ENCODE measurements at regions of chr1 and their contacts with region 1.

Region 1: DNA sequence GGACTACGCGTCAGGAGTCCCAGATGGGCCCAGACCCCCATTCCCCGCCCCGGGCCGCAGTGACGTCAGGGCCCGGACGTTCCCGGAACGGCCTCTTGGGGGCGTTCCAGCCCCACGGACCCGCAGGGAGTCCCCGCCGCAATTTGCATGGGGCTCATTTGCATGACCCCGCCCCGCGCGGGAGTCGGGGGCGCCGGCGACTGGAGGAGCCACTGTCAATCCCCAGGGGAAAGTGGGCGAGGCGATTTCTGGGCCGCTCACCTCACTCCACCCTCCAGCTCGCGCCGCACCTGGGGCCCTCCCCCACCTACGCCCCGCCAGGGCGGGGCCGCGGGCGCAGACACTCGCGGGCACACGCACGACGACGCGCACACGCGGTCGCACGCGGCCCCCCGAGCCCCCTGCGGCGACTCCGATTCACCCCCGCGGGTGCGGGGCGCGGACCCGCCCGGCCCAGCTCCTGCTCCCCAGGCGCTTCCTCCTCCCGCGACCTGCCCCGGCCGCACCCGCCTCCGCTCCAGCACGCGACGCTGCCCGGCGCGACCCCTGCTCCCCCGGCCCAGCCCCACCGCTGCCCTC is 13.2 kb downstream of the AGRN start:
- DNase-seq: peak; percentile 97
- ATAC-seq: peak; percentile 96
- H3K4me3 Mint-ChIP-seq: peak overlapping the region; percentile 72
- H3K27ac Mint-ChIP-seq: peak overlapping the region; percentile 24
- H3K4me1 Mint-ChIP-seq: peaks cover 19% of the 10 kb centered on the region
- H3K27me3 Mint-ChIP-seq: no peaks in the 10 kb centered on the region
- CTCF ChIP-seq: peak; percentile 67

Region 2: GRCh38 chr1:1069061-1069708 is 36.1 kb after region 1 on chr1:
- CTCF ChIA-PET with region 1: interaction called, 34 read pairs
- POLR2A ChIA-PET with region 1: interaction called, 159 read pairs
- intact Hi-C with region 1: loop called (anchors 1 kb)
- DNase-seq: peak; percentile 95
- ATAC-seq: peak; percentile 47
- H3K4me3 Mint-ChIP-seq: peak overlapping the region; percentile 81
- H3K27ac Mint-ChIP-seq: peak overlapping the region; percentile 72
- H3K4me1 Mint-ChIP-seq: peaks cover 37% of the 10 kb centered on the region
- H3K27me3 Mint-ChIP-seq: peaks cover 3% of the 10 kb centered on the region
- CTCF ChIP-seq: no peak

Region 3: DNA sequence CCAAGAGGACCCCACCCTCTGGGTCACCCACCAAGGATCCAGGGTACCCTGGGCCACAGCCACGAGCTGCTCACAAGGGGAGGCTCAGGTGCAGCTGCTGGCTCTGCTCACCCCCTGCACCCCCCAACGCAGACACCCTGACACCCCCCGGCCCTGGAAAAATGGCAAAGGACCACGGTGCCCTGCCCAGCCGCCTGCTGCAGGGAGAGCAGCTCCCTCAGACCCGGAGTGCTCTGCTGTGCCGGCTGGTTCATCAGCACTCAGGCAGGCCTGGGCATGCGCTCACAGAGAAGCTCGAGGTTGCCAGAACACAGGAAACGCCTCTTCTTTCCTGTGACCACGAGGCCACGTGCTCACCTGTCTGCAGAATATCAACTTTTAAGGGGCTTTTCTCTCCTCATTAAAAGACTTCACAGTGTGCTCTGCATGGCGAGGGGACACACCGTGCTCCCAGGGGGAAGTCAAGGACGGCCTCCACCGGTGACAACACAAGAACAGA is 217.7 kb after region 1 on chr1:
- CTCF ChIA-PET with region 1: interaction called, 7 read pairs
- POLR2A ChIA-PET with region 1: interaction called, 6 read pairs
- intact Hi-C with region 1: loop called (anchors 1 kb)
- DNase-seq: no peak
- ATAC-seq: peak; percentile 76
- H3K4me3 Mint-ChIP-seq: peak overlapping the region; percentile 64
- H3K27ac Mint-ChIP-seq: peak overlapping the region; percentile 72
- H3K4me1 Mint-ChIP-seq: peaks cover 19% of the 10 kb centered on the region
- H3K27me3 Mint-ChIP-seq: no peaks in the 10 kb centered on the region
- CTCF ChIP-seq: no peak

Region 4: DNA sequence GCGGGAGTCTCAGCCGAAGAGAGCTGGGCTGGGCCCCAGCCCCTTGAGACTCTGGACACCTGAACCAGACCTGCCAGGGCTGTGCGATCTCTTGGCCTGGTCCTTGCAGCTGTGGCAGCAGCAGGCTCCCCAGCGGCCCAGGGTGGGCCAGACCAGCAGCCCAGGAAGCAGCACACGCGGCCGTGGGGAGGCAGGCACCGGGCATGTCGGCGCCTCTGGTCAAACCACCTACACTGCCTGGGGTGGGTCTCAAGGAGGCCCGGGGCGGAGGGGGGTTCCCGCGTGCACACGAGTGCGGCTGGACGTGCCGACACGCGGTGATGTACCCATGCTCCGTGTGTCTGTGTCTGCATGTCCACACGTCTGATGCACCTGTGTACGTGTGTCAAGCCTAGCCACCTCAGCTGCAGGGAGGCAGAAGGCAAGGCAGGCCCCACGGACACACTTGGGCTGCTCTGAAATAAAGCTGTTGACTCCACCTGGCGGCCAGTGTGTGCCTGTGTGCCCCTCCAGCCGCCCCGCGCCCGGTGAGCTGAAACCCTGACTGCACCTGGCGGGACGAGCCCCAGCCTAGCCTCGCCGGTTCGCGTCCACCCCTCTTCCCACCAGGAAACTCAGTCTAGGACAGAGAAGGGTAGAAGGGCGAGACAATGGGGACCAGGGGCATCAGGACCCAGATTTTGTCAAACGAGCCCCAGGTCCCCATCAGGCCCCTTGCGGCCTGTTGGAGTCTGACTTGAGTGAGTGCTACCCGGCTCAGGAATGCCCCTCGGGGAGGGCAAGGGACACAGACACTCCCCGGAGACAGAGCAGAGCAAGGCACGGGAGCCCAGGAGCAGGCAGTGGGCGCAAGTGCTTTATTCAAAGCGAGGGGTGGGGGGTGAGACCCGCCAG is 258.7 kb after region 1 on chr1:
- CTCF ChIA-PET with region 1: interaction called, 29 read pairs
- POLR2A ChIA-PET with region 1: interaction called, 7 read pairs
- intact Hi-C with region 1: loop called (anchors 1 kb)
- DNase-seq: peak; percentile 68
- ATAC-seq: peak; percentile 92
- H3K4me3 Mint-ChIP-seq: no peak overlapping the region
- H3K27ac Mint-ChIP-seq: no peak overlapping the region
- H3K4me1 Mint-ChIP-seq: peaks cover 10% of the 10 kb centered on the region
- H3K27me3 Mint-ChIP-seq: peaks cover 2% of the 10 kb centered on the region
- CTCF ChIP-seq: no peak

Region 5: DNA sequence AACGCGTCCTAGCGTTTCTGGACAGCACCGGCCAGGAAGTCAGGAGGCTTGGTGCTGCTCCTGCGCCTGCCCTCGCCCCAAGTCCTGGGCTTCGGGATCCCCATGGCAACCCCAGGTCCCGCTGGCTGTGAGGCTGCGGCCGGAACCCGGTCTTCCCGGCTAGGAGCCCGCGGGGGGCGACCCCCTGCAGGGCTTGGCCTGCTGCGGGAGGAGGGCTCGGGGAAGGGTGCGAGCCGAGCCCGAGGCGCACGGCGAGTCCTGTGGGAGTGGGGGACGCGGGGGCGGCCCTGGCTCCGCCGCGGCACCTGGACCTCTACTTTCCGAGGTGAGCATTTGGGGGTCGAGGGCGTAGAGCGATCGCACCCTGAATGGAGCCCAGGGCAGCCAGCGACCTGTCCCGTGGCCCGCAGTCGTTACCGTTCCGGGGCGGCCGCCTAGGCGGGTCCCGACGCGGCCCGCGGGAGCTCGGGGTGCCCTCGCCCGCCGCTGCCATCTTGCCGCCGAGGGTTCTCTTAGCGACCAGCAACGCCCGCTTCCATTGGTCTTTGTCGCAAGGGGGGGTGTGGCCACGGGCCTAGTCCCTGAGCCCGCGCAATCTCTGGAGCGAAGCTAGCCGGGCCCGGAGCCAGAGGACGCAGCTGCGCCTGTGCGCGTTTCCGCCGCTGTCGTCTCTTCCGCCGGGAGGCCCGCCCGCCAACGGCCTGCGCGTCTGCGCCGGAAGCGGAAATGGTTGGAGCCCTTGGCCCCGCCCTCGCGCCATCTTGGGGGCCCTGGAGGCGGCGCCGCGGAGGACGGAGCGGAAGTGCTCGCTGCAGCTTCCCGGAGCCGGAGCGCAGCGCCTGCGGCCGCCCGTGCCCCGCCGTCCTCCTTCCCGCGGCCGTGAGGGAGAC is 1358.2 kb after region 1 on chr1 and contains the starts of genes MORN1 and RER1:
- CTCF ChIA-PET with region 1: no interaction called
- POLR2A ChIA-PET with region 1: no interaction called
- intact Hi-C with region 1: loop called (anchors 5 kb)
- DNase-seq: peak; percentile 96
- ATAC-seq: peak; percentile 94
- H3K4me3 Mint-ChIP-seq: peak within 1 kb of the TSS; percentile 88
- H3K27ac Mint-ChIP-seq: peak within 1 kb of the TSS; percentile 68
- H3K4me1 Mint-ChIP-seq: peaks cover 52% of the 10 kb centered on the region
- H3K27me3 Mint-ChIP-seq: no peaks in the 10 kb centered on the region
- CTCF ChIP-seq: no peak
- total RNA-seq, gene MORN1: 15.6 and 17.8 TPM in 2 replicates
- total RNA-seq, gene RER1: 102 and 105 TPM in 2 replicates